SK-N-SH (cell line): ENCODE measurements at regions of chr12 and their contacts with region 1.

Region 1: GRCh38 chr12:131454418-131455217 is 256.3 kb upstream of the SFSWAP start:
- DNase-seq: peak; percentile 90
- H3K4me3 ChIP-seq: no peak overlapping the region
- H3K27ac ChIP-seq: no peak overlapping the region
- H3K4me1 ChIP-seq: peaks cover 0 to 4% of the 10 kb centered on the region in 2 experiments; a peak in 1 of 4 replicates
- H3K27me3 ChIP-seq: no peaks in the 10 kb centered on the region
- CTCF ChIP-seq: no peak
- EP300 ChIP-seq: no peak
- RAD21 ChIP-seq: peak; percentile 80

Region 2: DNA sequence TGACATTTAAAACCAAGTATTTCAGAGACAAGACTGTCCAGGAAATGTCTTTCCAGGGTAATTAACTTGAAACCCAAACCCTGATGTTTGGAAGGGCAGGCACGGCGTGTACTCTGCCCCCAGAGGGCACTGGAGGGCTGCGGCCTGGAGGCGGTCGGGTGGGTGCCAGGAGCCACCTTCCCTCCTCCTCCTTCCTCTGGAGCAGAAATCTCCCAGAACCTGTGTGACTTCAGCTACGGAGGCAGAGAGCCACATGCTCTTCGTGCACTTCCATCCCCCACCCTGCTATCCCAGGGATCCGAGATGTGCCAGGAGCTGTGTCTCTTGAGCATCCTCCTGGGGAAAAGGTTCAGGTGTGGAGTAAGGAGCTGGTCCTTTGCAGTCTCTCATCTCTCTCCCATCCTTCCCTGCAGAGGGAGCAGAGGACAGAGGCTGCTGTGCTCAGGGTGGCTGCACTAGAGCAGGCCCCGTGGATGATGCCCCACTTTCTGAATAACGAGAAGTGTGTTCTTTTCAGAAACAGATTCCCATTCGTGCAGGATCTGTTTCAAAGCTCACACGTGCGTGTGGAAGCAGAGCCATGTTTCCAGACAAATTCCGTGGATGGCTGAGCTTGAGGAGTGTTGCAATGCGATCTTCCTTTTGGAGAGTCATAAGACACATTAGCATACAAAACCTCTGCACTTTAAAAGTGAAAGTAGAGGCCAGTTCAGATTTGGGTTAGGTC is 338.1 kb before region 1 on chr12:
- CTCF ChIA-PET with region 1: interaction called, 14 read pairs
- POLR2A ChIA-PET with region 1: no interaction called
- DNase-seq: peak; percentile 66
- H3K4me3 ChIP-seq: no peak overlapping the region
- H3K27ac ChIP-seq: no peak overlapping the region
- H3K4me1 ChIP-seq: peaks cover 0 to 29% of the 10 kb centered on the region in 2 experiments; a peak in 2 of 4 replicates
- H3K27me3 ChIP-seq: no peaks in the 10 kb centered on the region
- CTCF ChIP-seq: no peak
- EP300 ChIP-seq: no peak
- RAD21 ChIP-seq: peak; percentile 53

Region 3: DNA sequence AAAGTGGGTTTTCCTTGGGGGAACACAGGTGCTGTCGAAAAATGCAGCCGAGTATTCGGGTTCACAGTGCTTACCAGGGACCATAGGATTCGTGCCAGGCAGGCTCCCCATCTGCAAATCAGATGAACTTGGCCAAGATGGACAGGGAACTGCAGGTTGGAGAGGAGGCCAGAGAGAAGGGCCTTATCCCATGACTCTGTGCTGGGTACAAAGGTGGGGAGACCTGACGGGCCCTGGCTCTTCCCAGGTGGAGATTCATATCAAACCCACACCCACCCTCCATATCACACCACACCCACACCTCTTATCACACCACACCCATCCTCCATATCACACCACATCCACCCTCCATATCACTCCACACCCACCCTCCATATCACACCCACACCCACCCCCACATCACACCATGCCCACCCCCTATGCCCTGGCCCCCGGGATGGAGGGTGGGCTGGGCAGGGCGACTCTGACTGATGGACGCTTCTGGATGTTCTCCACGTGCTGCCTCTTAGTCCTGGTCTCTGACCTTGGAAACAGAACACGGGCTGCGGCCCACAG is 181.2 kb before region 1 on chr12:
- CTCF ChIA-PET with region 1: no interaction called
- POLR2A ChIA-PET with region 1: no interaction called
- DNase-seq: no peak
- H3K4me3 ChIP-seq: no peak overlapping the region
- H3K27ac ChIP-seq: no peak overlapping the region
- H3K4me1 ChIP-seq: peaks cover 0 to 4% of the 10 kb centered on the region in 2 experiments; a peak in 1 of 4 replicates
- H3K27me3 ChIP-seq: no peaks in the 10 kb centered on the region
- CTCF ChIP-seq: no peak
- EP300 ChIP-seq: no peak
- RAD21 ChIP-seq: no peak

Region 4: GRCh38 chr12:131397493-131398181 is 57.0 kb before region 1 on chr12:
- CTCF ChIA-PET with region 1: no interaction called
- POLR2A ChIA-PET with region 1: no interaction called
- DNase-seq: no peak
- H3K4me3 ChIP-seq: no peak overlapping the region
- H3K27ac ChIP-seq: no peak overlapping the region
- H3K4me1 ChIP-seq: peaks cover 0 to 4% of the 10 kb centered on the region in 2 experiments; a peak in 1 of 4 replicates
- H3K27me3 ChIP-seq: no peaks in the 10 kb centered on the region
- CTCF ChIP-seq: no peak
- EP300 ChIP-seq: no peak
- RAD21 ChIP-seq: no peak

Region 5: DNA sequence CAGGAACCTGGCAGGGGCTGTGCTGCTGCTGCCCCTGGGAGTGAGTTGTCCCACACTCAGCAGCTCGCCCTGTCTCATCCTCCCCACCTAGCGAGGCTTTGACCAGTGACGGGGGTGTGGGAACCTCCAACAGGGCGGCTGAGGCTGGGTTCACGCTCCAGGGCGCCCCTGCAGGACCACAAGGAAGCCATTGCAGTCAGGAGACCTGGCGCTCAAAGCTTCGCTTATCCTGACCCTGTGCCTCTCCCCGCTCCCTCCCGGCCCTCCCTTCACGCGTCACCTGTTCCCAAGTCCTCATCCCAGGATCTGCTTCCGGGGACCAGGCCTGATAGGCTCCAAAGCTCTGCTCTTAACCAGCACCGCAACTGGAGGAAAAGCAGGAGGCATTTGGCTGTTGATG is 15.7 kb before region 1 on chr12:
- CTCF ChIA-PET with region 1: interaction called, 10 read pairs
- POLR2A ChIA-PET with region 1: no interaction called
- DNase-seq: no peak
- H3K4me3 ChIP-seq: no peak overlapping the region
- H3K27ac ChIP-seq: no peak overlapping the region
- H3K4me1 ChIP-seq: peaks cover 0 to 21% of the 10 kb centered on the region in 2 experiments; a peak in 1 of 4 replicates
- H3K27me3 ChIP-seq: no peaks in the 10 kb centered on the region
- CTCF ChIP-seq: no peak
- EP300 ChIP-seq: no peak
- RAD21 ChIP-seq: no peak

Region 6: GRCh38 chr12:131473741-131474709 is 19.4 kb after region 1 on chr12:
- CTCF ChIA-PET with region 1: interaction called, 10 read pairs
- POLR2A ChIA-PET with region 1: no interaction called
- DNase-seq: no peak
- H3K4me3 ChIP-seq: no peak overlapping the region
- H3K27ac ChIP-seq: no peak overlapping the region
- H3K4me1 ChIP-seq: no peaks in the 10 kb centered on the region; a peak in 1 of 4 replicates
- H3K27me3 ChIP-seq: no peaks in the 10 kb centered on the region
- CTCF ChIP-seq: no peak
- EP300 ChIP-seq: no peak
- RAD21 ChIP-seq: no peak

Region 7: DNA sequence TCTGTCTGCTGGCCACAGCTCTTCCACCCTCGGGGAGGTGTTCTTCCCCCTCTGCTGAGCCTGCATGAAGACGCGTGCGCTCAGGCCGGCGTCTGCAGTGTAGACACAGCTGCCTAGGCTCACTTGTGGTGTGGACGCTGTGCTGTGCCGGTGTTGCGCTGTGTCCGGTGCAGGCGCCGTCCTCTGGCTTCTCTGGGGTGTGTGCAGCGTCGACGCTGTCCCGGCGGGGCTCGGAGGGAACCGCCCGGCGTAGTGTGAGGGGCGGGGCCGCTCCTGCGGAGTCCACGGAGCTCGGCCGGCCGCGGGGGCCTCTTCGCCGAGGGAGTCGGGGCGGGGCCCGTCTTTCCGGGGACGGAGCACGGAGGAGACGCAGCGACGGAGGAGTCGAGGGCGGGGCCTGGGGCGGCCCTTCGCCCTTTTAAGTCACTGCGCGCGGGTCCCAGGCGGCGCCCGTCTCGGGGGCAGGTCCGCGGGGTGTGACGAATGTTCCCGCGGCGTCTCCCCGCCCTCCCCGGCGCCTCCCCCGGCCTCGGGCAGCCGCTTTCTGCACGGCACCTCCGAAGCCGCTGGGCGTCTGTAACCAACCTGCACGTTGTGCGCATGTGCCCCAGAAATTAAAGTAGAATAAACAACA is 734.9 kb after region 1 on chr12:
- CTCF ChIA-PET with region 1: no interaction called
- POLR2A ChIA-PET with region 1: no interaction called
- DNase-seq: peak; percentile 64
- H3K4me3 ChIP-seq: peak overlapping the region in 1 of 2 experiments; percentile 21; a peak in 3 of 4 replicates
- H3K27ac ChIP-seq: no peak overlapping the region
- H3K4me1 ChIP-seq: peaks cover 0 to 3% of the 10 kb centered on the region in 2 experiments; a peak in 1 of 4 replicates
- H3K27me3 ChIP-seq: peaks cover 100% of the 10 kb centered on the region
- CTCF ChIP-seq: no peak
- EP300 ChIP-seq: no peak
- RAD21 ChIP-seq: no peak